Right cardiac atrium (tissue), 5 donors: ENCODE measurements at regions of chr1 and their contacts with region 1.

Region 1: GRCh38 chr1:12658531-12659453 is 14.9 kb downstream of the AADACL4 start:
- DNase-seq: peak; percentile 55 to 87 (median 81)
- ATAC-seq: peak; percentile 80 to 84
- H3K4me3 ChIP-seq: no peak overlapping the region
- H3K27ac ChIP-seq: no peak overlapping the region
- H3K4me1 ChIP-seq: no peaks in the 10 kb centered on the region
- H3K27me3 ChIP-seq: no peaks in the 10 kb centered on the region

Region 2: DNA sequence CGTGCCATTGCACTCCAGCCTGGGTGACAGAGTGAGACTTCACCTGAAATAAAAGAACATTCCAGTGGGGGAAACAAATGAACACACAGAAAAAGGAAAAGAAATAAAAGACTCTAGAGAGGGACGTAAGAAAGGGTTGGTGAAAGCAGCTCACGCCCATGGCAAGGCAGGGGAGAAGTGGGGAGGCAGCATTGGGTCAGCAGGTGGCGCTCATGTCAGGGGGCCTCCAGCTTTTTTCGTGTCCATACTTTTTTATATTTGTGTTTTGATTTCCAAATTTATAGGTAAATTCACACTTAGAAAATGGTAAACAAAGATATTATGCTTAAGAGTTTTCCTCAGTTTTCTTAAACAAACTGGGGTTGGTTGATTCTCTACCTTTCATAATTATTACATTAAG is 383.4 kb before region 1 on chr1:
- intact Hi-C with region 1: loop called in 1 of 4 experiments (anchors 10 kb)
- DNase-seq: peak; percentile 29 to 77 (median 69)
- ATAC-seq: no peak
- H3K4me3 ChIP-seq: no peak overlapping the region
- H3K27ac ChIP-seq: no peak overlapping the region
- H3K4me1 ChIP-seq: no peaks in the 10 kb centered on the region
- H3K27me3 ChIP-seq: no peaks in the 10 kb centered on the region

Region 3: DNA sequence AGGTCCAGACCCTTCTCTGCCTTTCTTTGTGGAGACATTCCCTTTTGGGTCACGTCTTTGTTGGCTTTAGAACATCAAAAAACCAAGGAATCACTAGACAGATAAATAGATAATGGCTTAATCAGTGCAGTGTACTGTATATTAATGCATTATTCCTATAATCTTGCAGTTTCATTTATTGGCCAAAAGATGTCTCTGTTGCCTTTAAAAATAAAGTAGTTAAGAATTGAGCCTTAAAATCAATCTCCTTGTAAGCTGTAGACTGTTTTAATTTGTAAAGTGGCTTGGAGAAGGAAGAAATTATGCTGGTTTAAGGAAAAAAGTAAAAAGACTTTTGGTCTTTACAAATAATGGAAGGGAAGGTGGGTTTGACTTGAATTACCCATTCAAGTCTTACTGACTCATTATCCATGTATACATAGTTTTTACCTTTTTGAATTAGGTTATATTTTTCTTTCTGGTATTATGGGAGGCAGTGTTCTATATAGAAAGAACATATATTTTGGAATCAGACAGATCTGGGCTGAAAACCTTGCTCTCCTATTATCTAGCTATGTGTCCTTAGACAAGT is 344.4 kb before region 1 on chr1:
- intact Hi-C with region 1: loop called in 3 of 4 experiments (anchors 2 to 5 kb)
- DNase-seq: no peak
- ATAC-seq: peak; percentile 34 to 35
- H3K4me3 ChIP-seq: no peak overlapping the region
- H3K27ac ChIP-seq: no peak overlapping the region
- H3K4me1 ChIP-seq: no peaks in the 10 kb centered on the region
- H3K27me3 ChIP-seq: no peaks in the 10 kb centered on the region

Region 4: GRCh38 chr1:12496154-12496913 is 162.5 kb before region 1 on chr1:
- intact Hi-C with region 1: no loop called
- DNase-seq: peak in 1 of 3 donors; percentile 81
- ATAC-seq: peak; percentile 90 to 93
- H3K4me3 ChIP-seq: no peak overlapping the region
- H3K27ac ChIP-seq: peak overlapping the region; percentile 63
- H3K4me1 ChIP-seq: peaks cover 6% of the 10 kb centered on the region
- H3K27me3 ChIP-seq: no peaks in the 10 kb centered on the region

Region 5: GRCh38 chr1:12518931-12519692 is 139.7 kb before region 1 on chr1:
- intact Hi-C with region 1: no loop called
- DNase-seq: peak; percentile 92 to 96 (median 95)
- ATAC-seq: peak; percentile 96 to 97
- H3K4me3 ChIP-seq: no peak overlapping the region
- H3K27ac ChIP-seq: no peak overlapping the region
- H3K4me1 ChIP-seq: peaks cover 2% of the 10 kb centered on the region
- H3K27me3 ChIP-seq: no peaks in the 10 kb centered on the region

Region 6: GRCh38 chr1:12565094-12565965 is 93.5 kb before region 1 on chr1:
- intact Hi-C with region 1: no loop called
- DNase-seq: peak in 2 of 3 donors; percentile 51 to 70
- ATAC-seq: peak; percentile 28 to 52
- H3K4me3 ChIP-seq: no peak overlapping the region
- H3K27ac ChIP-seq: peak overlapping the region; percentile 13
- H3K4me1 ChIP-seq: peaks cover 2% of the 10 kb centered on the region
- H3K27me3 ChIP-seq: no peaks in the 10 kb centered on the region